ENCODE measurements at regions of chr10 and their contacts with region 1.

Region 1: GRCh38 chr10:91923371-91924211 is at the start of gene BTAF1:
- DNase-seq: peak; percentile 86 to 90
- H3K4me3 ChIP-seq: peak within 1 kb of the TSS; percentile 72 to 87 (median 76)
- H3K27ac ChIP-seq: peak within 1 kb of the TSS; percentile 89
- H3K4me1 ChIP-seq: no peaks in the 10 kb centered on the region; a peak in 1 of 7 replicates
- H3K27me3 ChIP-seq: no peaks in the 10 kb centered on the region
- CTCF ChIP-seq: no peak
- EP300 ChIP-seq: no peak; a peak in 1 of 3 replicates
- POLR2A ChIP-seq: peak; percentile 87 to 88
- RAD21 ChIP-seq: no peak
- total RNA-seq, gene BTAF1: 39.1 TPM in 2 replicates

Region 2: GRCh38 chr10:91887272-91888076 is 36.1 kb before region 1 on chr10:
- CTCF ChIA-PET with region 1: no interaction called
- POLR2A ChIA-PET with region 1: interaction called, 11 read pairs
- DNase-seq: peak; percentile 89 to 90
- H3K4me3 ChIP-seq: peak overlapping the region; percentile 18 to 48 (median 27); a peak in 5 of 8 replicates
- H3K27ac ChIP-seq: peak overlapping the region; percentile 74
- H3K4me1 ChIP-seq: peaks cover 11 to 31% (median 23%) of the 10 kb centered on the region in 4 experiments
- H3K27me3 ChIP-seq: no peaks in the 10 kb centered on the region
- CTCF ChIP-seq: no peak
- EP300 ChIP-seq: peak in 1 of 2 experiments; percentile 84; a peak in 1 of 3 replicates
- POLR2A ChIP-seq: peak; percentile 31 to 80
- RAD21 ChIP-seq: no peak

Region 3: GRCh38 chr10:92124616-92125143 is 201.1 kb after region 1 on chr10:
- CTCF ChIA-PET with region 1: no interaction called
- POLR2A ChIA-PET with region 1: no interaction called
- DNase-seq: no peak
- H3K4me3 ChIP-seq: no peak overlapping the region
- H3K27ac ChIP-seq: no peak overlapping the region
- H3K4me1 ChIP-seq: peaks cover 0 to 2% (median 0%) of the 10 kb centered on the region in 4 experiments; a peak in 1 of 7 replicates
- H3K27me3 ChIP-seq: no peaks in the 10 kb centered on the region
- CTCF ChIP-seq: no peak
- EP300 ChIP-seq: no peak
- POLR2A ChIP-seq: no peak
- RAD21 ChIP-seq: no peak